IMR-90 (cell line): ENCODE measurements at regions of chr17 and their contacts with region 1.

Region 1: GRCh38 chr17:43846221-43846712 is 709 bp upstream of the CD300LG start:
- DNase-seq: peak; percentile 58
- ATAC-seq: peak; percentile 100
- H3K4me3 ChIP-seq: no peak overlapping the region
- H3K27ac ChIP-seq: no peak overlapping the region
- H3K4me1 ChIP-seq: no peaks in the 10 kb centered on the region
- H3K27me3 ChIP-seq: peaks cover 26% of the 10 kb centered on the region
- CTCF ChIP-seq: peak; percentile 93
- POLR2A ChIP-seq: no peak
- RAD21 ChIP-seq: peak; percentile 82

Region 2: GRCh38 chr17:43694077-43694870 is 152.0 kb before region 1 on chr17:
- CTCF ChIA-PET with region 1: no interaction called
- POLR2A ChIA-PET with region 1: no interaction called
- dilution Hi-C with region 1: no loop called
- in situ Hi-C with region 1: no loop called
- intact Hi-C with region 1: loop called (anchors 1 kb)
- DNase-seq: peak; percentile 75
- ATAC-seq: peak; percentile 100
- H3K4me3 ChIP-seq: no peak overlapping the region
- H3K27ac ChIP-seq: no peak overlapping the region
- H3K4me1 ChIP-seq: 0 out of 2 replicates have a peak, but pooled peaks cover 2% of the 10 kb centered on the region
- H3K27me3 ChIP-seq: peaks cover 19% of the 10 kb centered on the region
- CTCF ChIP-seq: peak; percentile 98
- POLR2A ChIP-seq: 0 out of 2 replicates have a peak, but pooled peaks have one; percentile 34
- RAD21 ChIP-seq: peak; percentile 99

Region 3: DNA sequence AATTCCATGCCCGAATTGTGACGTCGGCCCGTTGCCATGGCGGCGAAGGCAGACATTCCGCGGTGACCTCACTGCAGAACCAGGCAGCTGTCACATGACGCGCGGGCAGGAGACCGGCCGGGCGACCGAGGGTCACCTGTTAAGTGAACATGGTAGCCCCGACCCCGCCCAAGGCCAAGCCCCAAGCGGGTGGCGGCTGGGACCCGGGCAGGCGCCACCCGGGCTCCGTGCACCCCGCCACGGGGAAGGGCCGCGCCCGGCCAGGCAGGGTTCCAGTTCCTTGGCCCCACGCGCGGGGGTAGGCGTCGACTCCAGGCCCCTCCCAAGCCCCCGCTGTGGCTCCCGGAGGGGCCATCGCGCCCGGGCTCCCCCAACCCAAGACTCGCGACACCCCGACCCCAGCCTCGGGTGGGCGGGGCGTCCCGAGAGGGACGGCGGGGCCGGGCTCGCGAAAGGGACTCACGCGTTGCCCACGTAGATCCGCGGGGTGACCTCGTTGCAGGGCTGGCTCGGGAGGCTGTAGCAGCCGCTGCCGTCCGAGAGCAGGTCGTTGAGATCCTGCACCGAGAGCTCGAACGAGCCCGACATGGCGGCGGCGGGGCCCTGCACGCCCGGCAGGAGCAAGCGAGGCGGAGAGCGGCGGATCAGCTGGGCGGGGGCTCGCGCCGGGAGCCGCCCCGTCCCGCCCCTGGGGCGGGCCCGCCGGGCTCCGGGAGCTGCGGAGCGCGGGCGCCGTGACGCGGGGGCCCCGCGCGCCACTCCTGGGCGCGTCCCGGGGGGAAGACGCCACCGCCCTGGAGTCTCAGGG is 67.7 kb before region 1 on chr17 and contains the start of gene DUSP3:
- CTCF ChIA-PET with region 1: interaction called, 6 read pairs
- POLR2A ChIA-PET with region 1: no interaction called
- dilution Hi-C with region 1: no loop called
- in situ Hi-C with region 1: no loop called
- intact Hi-C with region 1: loop called (anchors 5 kb)
- DNase-seq: peak; percentile 91
- ATAC-seq: peak; percentile 96
- H3K4me3 ChIP-seq: peak within 1 kb of the TSS; percentile 67
- H3K27ac ChIP-seq: peak within 1 kb of the TSS; percentile 85
- H3K4me1 ChIP-seq: peaks cover 4% of the 10 kb centered on the region
- H3K27me3 ChIP-seq: no peaks in the 10 kb centered on the region
- CTCF ChIP-seq: no peak
- POLR2A ChIP-seq: peak; percentile 89
- RAD21 ChIP-seq: no peak
- total RNA-seq, gene DUSP3: 40.9 and 42.5 TPM in 2 replicates

Region 4: GRCh38 chr17:43823350-43824084 is 22.8 kb before region 1 on chr17:
- CTCF ChIA-PET with region 1: interaction called, 5 read pairs
- POLR2A ChIA-PET with region 1: no interaction called
- dilution Hi-C with region 1: no loop called
- in situ Hi-C with region 1: no loop called
- intact Hi-C with region 1: loop called (anchors 1 kb)
- DNase-seq: no peak
- ATAC-seq: peak; percentile 32
- H3K4me3 ChIP-seq: no peak overlapping the region
- H3K27ac ChIP-seq: no peak overlapping the region
- H3K4me1 ChIP-seq: peaks cover 6% of the 10 kb centered on the region
- H3K27me3 ChIP-seq: no peaks in the 10 kb centered on the region
- CTCF ChIP-seq: no peak
- POLR2A ChIP-seq: no peak
- RAD21 ChIP-seq: no peak

Region 5: DNA sequence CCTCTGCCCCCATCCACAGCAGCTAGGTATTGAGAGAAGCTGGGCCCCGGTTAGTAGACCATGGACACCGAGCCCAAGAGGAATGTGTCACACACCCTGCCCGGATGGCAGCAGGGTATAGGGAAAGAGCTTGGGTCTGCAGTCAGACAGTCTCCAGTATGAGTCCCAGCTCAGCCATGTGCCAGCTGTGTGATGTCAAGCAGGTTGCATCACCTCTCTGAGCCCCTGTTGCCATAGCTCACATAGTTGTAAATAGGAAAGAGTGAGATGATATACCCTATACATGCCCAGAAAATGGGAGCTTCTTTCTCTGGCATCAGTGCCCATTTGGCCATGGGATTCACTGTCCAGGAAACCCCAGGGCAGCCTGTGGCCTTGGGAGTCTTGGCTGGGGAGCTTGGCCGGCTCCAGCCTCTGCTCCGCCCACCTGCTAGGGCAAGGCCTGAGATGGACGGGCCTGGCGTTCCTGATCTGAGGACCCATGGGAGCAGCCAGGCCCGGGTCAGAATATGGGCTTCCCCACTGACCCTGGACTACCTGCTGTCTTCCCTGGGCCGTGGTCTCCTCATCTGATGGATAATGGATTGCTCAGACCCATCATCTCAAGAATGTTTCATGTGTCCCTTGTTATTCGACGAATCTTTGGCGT is 13.9 kb after region 1 on chr17:
- CTCF ChIA-PET with region 1: interaction called, 21 read pairs
- POLR2A ChIA-PET with region 1: no interaction called
- dilution Hi-C with region 1: no loop called
- in situ Hi-C with region 1: no loop called
- intact Hi-C with region 1: no loop called
- DNase-seq: no peak
- ATAC-seq: 0 out of 2 replicates have a peak, but pooled peaks have one; percentile 21
- H3K4me3 ChIP-seq: no peak overlapping the region
- H3K27ac ChIP-seq: no peak overlapping the region
- H3K4me1 ChIP-seq: no peaks in the 10 kb centered on the region
- H3K27me3 ChIP-seq: peaks cover 89% of the 10 kb centered on the region
- CTCF ChIP-seq: no peak
- POLR2A ChIP-seq: no peak
- RAD21 ChIP-seq: no peak

Region 6: DNA sequence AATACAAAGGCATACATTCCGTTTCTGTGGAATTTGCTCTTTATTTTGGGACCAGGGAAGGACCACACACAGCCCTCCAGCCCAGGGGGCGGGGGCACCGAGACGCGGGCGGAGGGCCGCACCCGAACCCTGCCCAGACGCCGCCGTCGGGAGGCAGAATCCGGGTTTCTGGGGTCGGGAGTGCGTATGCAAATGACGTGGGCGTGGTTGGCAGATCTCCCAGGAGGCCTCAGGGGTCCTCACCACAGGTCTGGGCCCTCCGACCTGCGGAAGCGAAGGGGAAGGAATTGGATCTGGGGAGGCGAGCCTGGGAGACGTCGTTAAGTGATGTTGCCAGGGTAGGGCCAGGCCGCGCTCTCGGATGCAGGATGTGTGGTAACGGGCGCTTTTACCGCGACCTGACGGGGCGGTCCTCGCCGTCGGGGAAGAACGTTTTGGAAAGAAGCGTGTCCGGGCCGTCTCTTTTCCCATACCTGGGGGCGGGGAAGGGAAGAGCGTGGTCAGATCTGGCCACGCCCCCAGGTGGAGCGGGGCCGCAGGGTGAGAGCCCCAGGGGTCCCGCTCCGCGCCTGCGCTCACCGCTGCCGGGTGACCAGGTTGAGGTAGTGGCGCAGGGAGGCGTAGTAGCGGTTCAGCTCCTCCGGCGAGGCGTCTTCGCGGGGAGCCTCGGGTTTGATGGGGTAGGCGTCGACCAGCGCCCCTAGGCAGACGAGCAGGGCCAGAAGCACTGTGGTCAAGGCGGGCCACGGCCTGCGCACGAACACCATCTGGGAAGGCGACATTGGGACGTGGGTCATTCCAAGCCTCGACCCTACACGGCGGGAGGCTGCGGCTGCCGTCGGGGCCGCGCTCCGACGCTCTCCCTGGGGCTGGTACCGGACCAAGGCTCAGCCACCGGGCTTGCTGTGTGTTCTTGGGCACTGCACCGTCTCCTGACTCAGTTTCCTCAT is 106.7 kb after region 1 on chr17:
- CTCF ChIA-PET with region 1: no interaction called
- POLR2A ChIA-PET with region 1: no interaction called
- dilution Hi-C with region 1: no loop called
- in situ Hi-C with region 1: no loop called
- intact Hi-C with region 1: no loop called
- DNase-seq: no peak
- ATAC-seq: no peak
- H3K4me3 ChIP-seq: no peak overlapping the region
- H3K27ac ChIP-seq: no peak overlapping the region
- H3K4me1 ChIP-seq: no peaks in the 10 kb centered on the region
- H3K27me3 ChIP-seq: peaks cover 67% of the 10 kb centered on the region
- CTCF ChIP-seq: no peak
- POLR2A ChIP-seq: no peak
- RAD21 ChIP-seq: no peak